Naive thymus-derived CD4-positive, alpha-beta T cell (primary cell): ENCODE measurements at regions of chr2 and their contacts with region 1.

Region 1: GRCh38 chr2:120231974-120232635 is 8.9 kb upstream of the TMEM185B start:
- DNase-seq: peak; percentile 19 to 82 (median 77)
- ATAC-seq: peak; percentile 93
- H3K4me3 ChIP-seq: peak overlapping the region; percentile 72
- H3K4me3 Mint-ChIP-seq: peak overlapping the region; percentile 86 to 100 (median 96)
- H3K27ac ChIP-seq: peak overlapping the region; percentile 81
- H3K27ac Mint-ChIP-seq: peak overlapping the region; percentile 93 to 98 (median 96)
- H3K4me1 ChIP-seq: peaks cover 19 to 29% of the 10 kb centered on the region in 2 donors
- H3K4me1 Mint-ChIP-seq: peaks cover 15 to 65% (median 59%) of the 10 kb centered on the region in 7 donors
- H3K27me3 ChIP-seq: no peaks in the 10 kb centered on the region
- H3K27me3 Mint-ChIP-seq: no peaks in the 10 kb centered on the region

Region 2: GRCh38 chr2:119694845-119695521 is 537.1 kb before region 1 on chr2:
- CTCF ChIA-PET with region 1: interaction called, 3 read pairs
- POLR2A ChIA-PET with region 1: no interaction called
- intact Hi-C with region 1: loop called in 1 of 2 experiments (anchors 5 kb)
- DNase-seq: peak in 7 of 9 donors; percentile 62 to 79 (median 72)
- ATAC-seq: peak; percentile 74
- H3K4me3 ChIP-seq: peak overlapping the region; percentile 53
- H3K4me3 Mint-ChIP-seq: peak overlapping the region in 9 of 10 donors; percentile 74 to 91 (median 89)
- H3K27ac ChIP-seq: peak overlapping the region; percentile 56
- H3K27ac Mint-ChIP-seq: peak overlapping the region in 8 of 9 donors; percentile 83 to 97 (median 92)
- H3K4me1 ChIP-seq: peaks cover 0 to 50% of the 10 kb centered on the region in 2 donors
- H3K4me1 Mint-ChIP-seq: peaks cover 17 to 60% (median 55%) of the 10 kb centered on the region in 7 donors
- H3K27me3 ChIP-seq: no peaks in the 10 kb centered on the region
- H3K27me3 Mint-ChIP-seq: no peaks in the 10 kb centered on the region

Region 3: GRCh38 chr2:120261387-120262006 is 29.4 kb after region 1 on chr2:
- CTCF ChIA-PET with region 1: no interaction called
- POLR2A ChIA-PET with region 1: interaction called, 73 read pairs
- intact Hi-C with region 1: loop called in 1 of 2 experiments (anchors 5 kb)
- DNase-seq: peak in 1 of 9 donors; percentile 66
- ATAC-seq: peak; percentile 40
- H3K4me3 ChIP-seq: no peak overlapping the region
- H3K4me3 Mint-ChIP-seq: no peak overlapping the region
- H3K27ac ChIP-seq: no peak overlapping the region
- H3K27ac Mint-ChIP-seq: no peak overlapping the region
- H3K4me1 ChIP-seq: no peaks in the 10 kb centered on the region
- H3K4me1 Mint-ChIP-seq: peaks cover 20 to 35% (median 32%) of the 10 kb centered on the region in 7 donors
- H3K27me3 ChIP-seq: no peaks in the 10 kb centered on the region
- H3K27me3 Mint-ChIP-seq: no peaks in the 10 kb centered on the region

Region 4: GRCh38 chr2:120287183-120288015 is 55.3 kb after region 1 on chr2:
- CTCF ChIA-PET with region 1: no interaction called
- POLR2A ChIA-PET with region 1: interaction called, 3 read pairs
- intact Hi-C with region 1: loop called in 1 of 2 experiments (anchors 1 kb)
- DNase-seq: peak in 1 of 9 donors; percentile 34
- ATAC-seq: peak; percentile 63
- H3K4me3 ChIP-seq: no peak overlapping the region
- H3K4me3 Mint-ChIP-seq: peak overlapping the region in 3 of 10 donors; percentile 18 to 86 (median 30)
- H3K27ac ChIP-seq: no peak overlapping the region
- H3K27ac Mint-ChIP-seq: peak overlapping the region in 6 of 9 donors; percentile 28 to 91 (median 64)
- H3K4me1 ChIP-seq: peaks cover 0 to 11% of the 10 kb centered on the region in 2 donors
- H3K4me1 Mint-ChIP-seq: peaks cover 13 to 76% (median 26%) of the 10 kb centered on the region in 7 donors
- H3K27me3 ChIP-seq: no peaks in the 10 kb centered on the region
- H3K27me3 Mint-ChIP-seq: no peaks in the 10 kb centered on the region

Region 5: GRCh38 chr2:120305296-120305695 is 73.2 kb after region 1 on chr2:
- CTCF ChIA-PET with region 1: no interaction called
- POLR2A ChIA-PET with region 1: no interaction called
- intact Hi-C with region 1: no loop called
- DNase-seq: no peak
- ATAC-seq: no peak
- H3K4me3 ChIP-seq: no peak overlapping the region
- H3K4me3 Mint-ChIP-seq: no peak overlapping the region
- H3K27ac ChIP-seq: no peak overlapping the region
- H3K27ac Mint-ChIP-seq: no peak overlapping the region
- H3K4me1 ChIP-seq: peaks cover 0 to 3% of the 10 kb centered on the region in 2 donors
- H3K4me1 Mint-ChIP-seq: peaks cover 5 to 34% (median 13%) of the 10 kb centered on the region in 7 donors
- H3K27me3 ChIP-seq: no peaks in the 10 kb centered on the region
- H3K27me3 Mint-ChIP-seq: peaks cover 0 to 5% (median 0%) of the 10 kb centered on the region in 5 donors

Region 6: GRCh38 chr2:120343433-120344105 is 111.5 kb after region 1 on chr2:
- CTCF ChIA-PET with region 1: no interaction called
- POLR2A ChIA-PET with region 1: no interaction called
- intact Hi-C with region 1: no loop called
- DNase-seq: peak in 8 of 9 donors; percentile 37 to 66 (median 48)
- ATAC-seq: peak; percentile 64
- H3K4me3 ChIP-seq: peak overlapping the region; percentile 13
- H3K4me3 Mint-ChIP-seq: peak overlapping the region; percentile 45 to 79 (median 69)
- H3K27ac ChIP-seq: no peak overlapping the region
- H3K27ac Mint-ChIP-seq: no peak overlapping the region
- H3K4me1 ChIP-seq: peaks cover 9 to 15% of the 10 kb centered on the region in 2 donors
- H3K4me1 Mint-ChIP-seq: peaks cover 9 to 26% (median 22%) of the 10 kb centered on the region in 7 donors
- H3K27me3 ChIP-seq: peaks cover 5 to 40% of the 10 kb centered on the region in 2 donors
- H3K27me3 Mint-ChIP-seq: peaks cover 41 to 72% (median 51%) of the 10 kb centered on the region in 5 donors